KBM-7 (cell line): ENCODE measurements at regions of chr20 and their contacts with region 1.

Region 1: DNA sequence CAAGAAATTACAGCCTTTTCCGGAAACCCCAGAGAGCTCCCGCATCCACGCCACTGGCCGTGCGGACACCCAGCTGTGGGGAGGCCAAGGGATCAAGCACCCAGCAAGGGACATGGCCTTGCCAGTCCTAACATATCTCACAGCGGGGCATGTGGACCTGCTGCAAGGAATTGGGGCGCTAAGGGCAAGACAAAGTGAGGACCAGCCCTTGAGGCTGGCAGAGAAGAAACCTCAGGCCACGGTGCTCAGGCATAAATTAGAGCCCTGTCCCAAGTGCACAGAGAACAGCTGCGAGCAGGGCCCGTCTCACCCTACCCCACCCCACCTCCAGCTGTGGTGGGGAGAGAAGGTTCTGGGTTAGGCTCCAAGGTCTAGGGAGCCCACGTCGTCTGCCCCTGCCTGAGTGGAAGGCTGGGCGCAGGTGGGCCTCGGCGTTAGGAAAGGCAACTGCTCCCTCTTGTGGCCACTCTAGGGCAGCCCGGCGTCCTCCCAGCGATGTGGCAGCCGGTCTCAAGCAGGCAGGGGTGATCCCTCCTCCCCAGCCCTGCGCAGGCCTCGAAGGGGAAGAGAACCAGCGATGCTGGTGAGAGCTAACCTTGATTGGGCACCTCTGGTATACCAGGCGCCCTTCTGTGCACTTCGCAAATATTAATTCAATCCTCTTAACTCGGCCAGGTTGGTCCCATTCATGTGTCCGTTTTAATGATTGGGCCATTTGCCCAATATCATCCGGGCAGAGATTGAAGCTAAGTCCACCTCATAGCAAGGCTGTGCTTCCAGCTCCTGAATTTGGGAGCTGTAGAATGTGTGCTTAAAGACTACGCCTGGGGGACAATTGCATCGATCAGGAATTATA is 235.8 kb downstream of the NFATC2 start:
- DNase-seq: peak; percentile 82

Region 2: DNA sequence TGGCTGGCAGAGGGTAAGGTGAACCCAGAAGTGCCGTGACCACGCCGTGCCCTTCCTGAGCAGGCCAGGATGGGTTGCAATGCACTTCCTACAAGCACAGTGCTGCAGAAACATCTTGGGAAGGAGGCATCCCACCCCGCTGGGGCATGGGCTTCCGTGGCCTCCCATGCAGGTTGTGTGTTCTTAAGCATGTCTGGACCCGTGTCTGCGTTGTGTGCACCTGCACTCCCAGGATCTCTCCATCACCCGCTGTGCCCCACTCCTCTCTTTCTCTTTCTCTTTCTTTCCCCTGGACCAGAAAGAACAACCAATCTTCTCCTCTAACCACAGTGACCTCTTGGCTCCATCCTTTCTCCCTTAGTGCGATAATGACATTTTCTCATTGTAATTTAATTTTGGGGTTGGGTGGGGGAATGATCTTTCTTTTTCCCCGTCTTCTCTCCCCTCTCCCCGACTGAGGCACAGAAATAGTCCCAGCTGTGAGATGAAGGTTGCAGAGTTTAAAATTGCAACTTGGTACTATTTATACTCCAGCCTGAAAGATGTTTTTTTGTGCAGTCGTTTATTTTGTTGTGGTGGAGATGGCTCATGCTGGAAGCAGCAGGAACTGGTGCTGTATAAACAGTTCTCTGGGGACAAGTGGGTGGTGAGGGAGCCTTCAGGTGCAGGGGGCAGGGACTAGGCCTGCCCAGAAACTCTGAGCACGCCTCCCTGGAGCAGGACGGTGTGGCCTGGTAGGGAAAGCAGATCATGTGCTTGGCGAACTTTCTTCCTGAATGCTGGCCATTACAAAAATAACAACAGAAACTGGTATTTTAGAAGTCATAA is 491.4 kb before region 1 on chr20:
- in situ Hi-C with region 1: loop called (anchors 25 kb)
- DNase-seq: no peak

Region 3: GRCh38 chr20:50987592-50988210 is 319.0 kb before region 1 on chr20:
- in situ Hi-C with region 1: loop called (anchors 25 kb)
- DNase-seq: peak; percentile 89